Caco-2 (cell line): ENCODE measurements at regions of chr4 and their contacts with region 1.

Region 1: DNA sequence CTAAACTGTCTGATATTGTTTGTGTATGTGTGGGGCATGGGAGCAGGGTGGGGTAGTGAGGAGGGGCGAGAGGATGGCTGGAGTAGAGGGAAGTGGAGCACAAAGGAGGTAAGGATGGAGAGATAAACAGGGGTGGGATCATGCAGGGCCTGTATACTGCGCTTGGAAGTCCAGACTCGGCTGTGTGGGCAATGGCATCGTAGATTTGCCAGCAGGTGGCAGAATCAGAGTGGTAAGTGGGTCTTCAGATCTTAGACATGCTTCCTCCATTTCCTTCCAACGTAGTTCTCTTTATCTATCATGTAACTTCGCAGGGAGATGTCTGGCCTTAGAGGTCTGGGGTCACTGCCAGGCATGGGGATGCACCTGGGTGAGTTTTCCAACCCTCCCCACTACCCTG is 155.5 kb downstream of the PDGFRA start:
- DNase-seq: peak in 1 of 2 experiments; percentile 13
- H3K4me3 ChIP-seq: no peak overlapping the region
- H3K4me3 Mint-ChIP-seq: no peak overlapping the region
- H3K27ac Mint-ChIP-seq: no peak overlapping the region
- H3K4me1 ChIP-seq: no peaks in the 10 kb centered on the region
- H3K4me1 Mint-ChIP-seq: no peaks in the 10 kb centered on the region
- H3K27me3 ChIP-seq: no peaks in the 10 kb centered on the region
- H3K27me3 Mint-ChIP-seq: peaks cover 4% of the 10 kb centered on the region
- CTCF ChIP-seq: peak; percentile 26 to 34

Region 2: GRCh38 chr4:54256506-54257486 is 127.8 kb before region 1 on chr4:
- CTCF ChIA-PET with region 1: no interaction called
- POLR2A ChIA-PET with region 1: no interaction called
- intact Hi-C with region 1: no loop called
- DNase-seq: no peak
- H3K4me3 ChIP-seq: no peak overlapping the region
- H3K4me3 Mint-ChIP-seq: no peak overlapping the region
- H3K27ac Mint-ChIP-seq: no peak overlapping the region
- H3K4me1 ChIP-seq: no peaks in the 10 kb centered on the region; the same call in 1 of the 2 replicates
- H3K4me1 Mint-ChIP-seq: no peaks in the 10 kb centered on the region
- H3K27me3 ChIP-seq: no peaks in the 10 kb centered on the region
- H3K27me3 Mint-ChIP-seq: no peaks in the 10 kb centered on the region
- CTCF ChIP-seq: no peak

Region 3: GRCh38 chr4:54440394-54441136 is 56.0 kb after region 1 on chr4:
- CTCF ChIA-PET with region 1: no interaction called
- POLR2A ChIA-PET with region 1: no interaction called
- intact Hi-C with region 1: loop called (anchors 1 kb)
- DNase-seq: peak in 1 of 2 experiments; percentile 39
- H3K4me3 ChIP-seq: no peak overlapping the region
- H3K4me3 Mint-ChIP-seq: no peak overlapping the region
- H3K27ac Mint-ChIP-seq: no peak overlapping the region
- H3K4me1 ChIP-seq: no peaks in the 10 kb centered on the region
- H3K4me1 Mint-ChIP-seq: no peaks in the 10 kb centered on the region
- H3K27me3 ChIP-seq: no peaks in the 10 kb centered on the region
- H3K27me3 Mint-ChIP-seq: peaks cover 22% of the 10 kb centered on the region
- CTCF ChIP-seq: peak; percentile 54 to 64

Region 4: DNA sequence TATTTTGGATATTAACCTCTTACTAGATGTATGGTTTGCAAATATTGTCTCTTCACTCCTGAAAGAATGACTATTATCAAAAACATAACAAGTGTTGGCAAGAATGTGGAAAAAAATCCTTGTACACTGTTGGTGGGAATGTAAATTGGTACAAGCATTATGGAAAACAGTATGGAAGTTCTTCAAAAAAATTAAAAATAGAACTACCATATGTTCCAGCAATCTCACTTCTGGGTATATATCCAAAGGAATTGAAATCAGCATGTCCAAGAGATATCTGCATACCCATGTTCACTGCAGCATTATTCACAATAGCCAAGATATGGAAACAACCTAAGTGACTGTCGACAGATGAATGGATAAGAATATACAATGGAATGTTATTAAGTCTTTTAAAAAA is 211.6 kb after region 1 on chr4:
- CTCF ChIA-PET with region 1: no interaction called
- POLR2A ChIA-PET with region 1: no interaction called
- intact Hi-C with region 1: no loop called
- DNase-seq: no peak
- H3K4me3 ChIP-seq: no peak overlapping the region
- H3K4me3 Mint-ChIP-seq: no peak overlapping the region
- H3K27ac Mint-ChIP-seq: no peak overlapping the region
- H3K4me1 ChIP-seq: no peaks in the 10 kb centered on the region
- H3K4me1 Mint-ChIP-seq: peaks cover 6% of the 10 kb centered on the region
- H3K27me3 ChIP-seq: no peaks in the 10 kb centered on the region
- H3K27me3 Mint-ChIP-seq: no peaks in the 10 kb centered on the region
- CTCF ChIP-seq: no peak